ENCODE measurements at regions of chr1 and their contacts with region 1.

Region 1: GRCh38 chr1:201703621-201704439 is 125.1 kb upstream of the IPO9 start:
- DNase-seq: peak; percentile 88 to 95
- ATAC-seq: peak; percentile 93
- H3K4me3 ChIP-seq: no peak overlapping the region
- H3K27ac ChIP-seq: no peak overlapping the region
- H3K4me1 ChIP-seq: no peaks in the 10 kb centered on the region
- H3K27me3 ChIP-seq: no peaks in the 10 kb centered on the region

Region 2: DNA sequence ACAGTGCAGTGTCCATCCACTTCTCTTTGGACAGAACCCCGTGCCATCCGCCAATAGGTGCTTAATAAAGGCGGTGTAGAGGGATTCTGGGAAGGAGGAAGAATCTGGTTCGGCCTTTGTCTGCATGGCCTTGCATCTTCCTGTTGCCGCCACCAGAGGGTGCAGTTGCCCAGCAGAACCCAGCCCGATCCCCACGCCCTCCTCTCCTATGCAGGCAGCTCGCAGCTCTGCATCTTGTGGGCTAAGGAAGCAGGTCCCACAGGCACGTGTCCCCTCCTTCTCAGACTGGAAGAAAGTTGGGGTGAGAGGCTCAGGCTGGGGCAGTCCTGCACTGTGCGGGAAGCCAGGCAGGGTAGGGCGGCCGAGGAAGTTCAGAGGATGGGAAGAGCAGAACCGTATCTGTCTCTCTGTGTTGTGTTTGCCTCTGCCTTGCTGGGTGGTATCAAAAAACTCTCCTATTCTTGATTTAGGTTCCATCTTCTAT is 144.1 kb before region 1 on chr1:
- intact Hi-C with region 1: loop called (anchors 1 kb)
- DNase-seq: peak; percentile 84 to 92
- ATAC-seq: peak; percentile 93
- H3K4me3 ChIP-seq: no peak overlapping the region
- H3K27ac ChIP-seq: no peak overlapping the region
- H3K4me1 ChIP-seq: no peaks in the 10 kb centered on the region
- H3K27me3 ChIP-seq: no peaks in the 10 kb centered on the region

Region 3: DNA sequence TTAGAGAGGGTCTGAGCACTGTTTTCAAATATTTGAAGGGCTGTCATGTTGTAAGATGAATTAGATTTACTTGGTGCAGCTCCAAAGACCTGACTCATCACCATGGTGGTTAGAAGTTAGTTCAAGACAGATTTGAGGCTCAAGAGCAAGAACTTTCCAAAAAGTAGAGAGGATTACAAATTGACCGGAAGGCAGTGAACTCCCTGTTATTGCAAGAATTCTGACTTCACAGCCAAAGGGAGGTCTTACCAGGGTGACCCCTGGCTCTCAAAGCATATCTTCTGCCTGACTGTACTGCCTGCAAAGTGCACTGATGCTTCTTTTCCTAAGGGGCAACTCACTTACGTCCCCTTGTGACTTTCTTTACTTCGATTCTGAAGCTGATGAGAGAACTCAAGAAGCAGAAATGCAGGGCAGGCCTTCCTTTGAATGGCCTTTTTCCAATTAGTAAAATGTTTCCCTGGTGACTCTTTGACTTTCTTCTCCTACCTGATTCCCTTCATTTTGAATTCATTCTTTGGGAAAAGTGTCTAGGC is 78.5 kb before region 1 on chr1:
- intact Hi-C with region 1: no loop called
- DNase-seq: no peak
- ATAC-seq: peak; percentile 54
- H3K4me3 ChIP-seq: no peak overlapping the region
- H3K27ac ChIP-seq: peak overlapping the region in 1 of 2 donors; percentile 60
- H3K4me1 ChIP-seq: peaks cover 3 to 11% of the 10 kb centered on the region in 2 donors
- H3K27me3 ChIP-seq: no peaks in the 10 kb centered on the region

Measured in aorta (tissue), 5 donors.